MCF 10A (cell line): ENCODE measurements at regions of chr7 and their contacts with region 1.

Region 1: GRCh38 chr7:85030893-85031292 is 156.0 kb downstream of the SEMA3D start:
- DNase-seq: peak; percentile 35
- H3K4me3 Mint-ChIP-seq: no peak overlapping the region
- H3K27ac Mint-ChIP-seq: no peak overlapping the region
- H3K4me1 Mint-ChIP-seq: peaks cover 6% of the 10 kb centered on the region
- H3K27me3 Mint-ChIP-seq: peaks cover 50% of the 10 kb centered on the region
- CTCF ChIP-seq: peak; percentile 39

Region 2: GRCh38 chr7:85135977-85136376 is 105.1 kb after region 1 on chr7:
- CTCF ChIA-PET with region 1: no interaction called
- POLR2A ChIA-PET with region 1: no interaction called
- intact Hi-C with region 1: no loop called
- DNase-seq: no peak
- H3K4me3 Mint-ChIP-seq: no peak overlapping the region
- H3K27ac Mint-ChIP-seq: no peak overlapping the region
- H3K4me1 Mint-ChIP-seq: no peaks in the 10 kb centered on the region
- H3K27me3 Mint-ChIP-seq: peaks cover 21% of the 10 kb centered on the region
- CTCF ChIP-seq: no peak

Region 3: DNA sequence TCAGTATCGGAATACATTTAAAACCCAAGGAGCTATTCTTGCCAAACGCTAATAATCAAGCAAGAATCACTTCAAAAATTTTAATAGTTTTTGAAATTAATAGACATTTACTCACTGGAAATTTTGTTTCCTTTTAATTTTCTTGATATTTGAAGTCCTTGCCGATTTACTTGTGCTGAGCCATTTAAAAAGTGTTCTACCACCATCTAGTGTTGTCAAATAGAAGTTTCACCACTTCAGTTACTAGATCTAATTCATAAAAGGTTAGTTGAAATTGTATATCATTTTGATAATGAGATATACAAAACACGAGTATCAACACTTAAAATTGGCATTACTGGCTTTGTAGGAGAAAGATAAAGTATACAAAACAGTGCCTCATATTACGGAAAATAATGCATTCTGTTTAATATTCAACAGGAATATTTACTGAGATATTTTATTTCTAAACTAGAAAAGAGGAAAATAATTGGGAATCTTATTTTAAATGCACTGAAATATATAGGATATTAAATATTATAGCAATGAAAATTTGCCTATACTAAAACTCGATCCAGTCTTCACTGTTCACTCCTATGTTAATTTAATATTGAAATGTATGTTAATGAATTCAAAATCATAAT is 820.8 kb after region 1 on chr7:
- CTCF ChIA-PET with region 1: interaction called, 35 read pairs
- POLR2A ChIA-PET with region 1: interaction called, 3 read pairs
- intact Hi-C with region 1: loop called (anchors 1 kb)
- DNase-seq: peak; percentile 17
- H3K4me3 Mint-ChIP-seq: no peak overlapping the region
- H3K27ac Mint-ChIP-seq: no peak overlapping the region
- H3K4me1 Mint-ChIP-seq: no peaks in the 10 kb centered on the region
- H3K27me3 Mint-ChIP-seq: peaks cover 80% of the 10 kb centered on the region
- CTCF ChIP-seq: peak; percentile 40